Left cardiac atrium (tissue), 4 donors: ENCODE measurements at regions of chr4 and their contacts with region 1.

Region 1: GRCh38 chr4:11428899-11429698 is 405 bp upstream of the HS3ST1 start:
- DNase-seq: peak; percentile 89
- ATAC-seq: peak; percentile 94 to 98

Region 2: DNA sequence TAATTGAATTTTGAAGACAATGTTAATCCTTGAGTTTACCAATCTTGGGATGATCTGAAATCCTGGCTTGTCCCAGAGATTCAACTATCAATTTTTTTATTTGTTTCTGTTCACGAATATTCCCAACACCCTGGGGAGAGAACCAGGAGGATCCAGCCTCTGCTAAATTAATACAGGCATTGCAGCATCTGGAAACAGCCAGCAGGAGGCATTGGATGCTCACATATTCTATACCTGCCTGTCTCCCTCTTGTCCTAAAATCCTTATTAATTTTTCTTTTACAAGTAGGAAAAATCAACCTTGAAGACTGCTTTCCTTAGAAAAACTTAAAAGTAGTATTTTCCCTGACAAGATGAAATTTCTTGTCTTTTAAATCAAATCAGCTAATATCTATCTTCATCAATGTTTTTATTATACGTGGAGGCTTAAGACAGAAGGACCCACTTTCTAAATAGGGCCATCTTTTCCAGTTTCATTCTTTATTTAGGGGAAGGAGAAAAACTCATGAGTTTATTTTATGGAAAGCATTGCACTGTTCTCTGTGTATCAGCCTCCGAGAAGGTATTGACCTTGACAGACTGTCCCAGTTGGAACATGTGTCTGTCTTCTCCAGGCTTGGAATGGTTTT is 846.9 kb before region 1 on chr4:
- intact Hi-C with region 1: loop called in 1 of 2 experiments (anchors 5 kb)
- DNase-seq: no peak
- ATAC-seq: peak; percentile 49 to 69

Region 3: DNA sequence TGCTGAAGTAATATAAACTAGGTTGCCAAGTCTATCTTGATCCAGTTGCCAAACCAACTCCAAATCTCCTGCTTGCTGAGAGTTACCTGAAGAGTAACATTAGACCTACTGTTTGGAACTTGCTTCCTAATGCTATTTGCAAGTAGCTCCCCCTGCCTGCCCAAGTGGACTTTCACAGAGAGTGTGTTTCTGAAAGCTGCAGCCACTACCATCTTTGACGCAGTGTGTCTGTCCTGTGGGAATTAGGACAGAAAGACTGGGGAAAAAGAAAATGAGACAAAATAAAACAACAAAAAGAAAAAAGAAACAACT is 194.6 kb after region 1 on chr4:
- intact Hi-C with region 1: loop called in 1 of 2 experiments (anchors 5 kb)
- DNase-seq: peak; percentile 20
- ATAC-seq: peak; percentile 35 to 48